HepG2 (cell line): ENCODE measurements at regions of chr11 and their contacts with region 1.

Region 1: DNA sequence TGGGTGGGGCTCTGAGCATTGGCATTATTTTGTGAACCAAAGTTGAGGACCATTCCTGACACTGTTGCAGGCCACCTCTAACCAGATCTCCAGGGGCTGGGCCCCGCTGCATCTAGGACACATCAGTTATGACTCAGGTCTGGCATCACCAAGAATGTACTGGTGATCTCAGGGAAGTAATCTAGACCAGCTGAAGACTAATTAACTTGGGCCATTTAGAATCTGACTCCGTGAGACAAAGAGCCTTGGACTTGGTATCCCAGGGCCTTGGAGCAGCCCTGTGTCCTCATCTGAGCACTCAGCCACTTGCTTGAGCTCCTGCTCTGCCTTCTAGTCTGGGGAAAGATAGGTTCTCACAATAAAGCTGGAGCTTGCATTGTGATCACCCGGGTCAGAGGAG is 200.6 kb downstream of the KIRREL3 start:
- DNase-seq: no peak
- ATAC-seq: no peak
- H3K4me3 ChIP-seq: no peak overlapping the region
- H3K27ac ChIP-seq: no peak overlapping the region
- H3K4me1 ChIP-seq: no peaks in the 10 kb centered on the region
- H3K27me3 ChIP-seq: peaks cover 0 to 5% of the 10 kb centered on the region in 2 experiments; a peak in 1 of 5 replicates
- CTCF ChIP-seq: no peak
- EP300 ChIP-seq: no peak
- POLR2A ChIP-seq: no peak
- RAD21 ChIP-seq: no peak

Region 2: GRCh38 chr11:126736682-126737572 is 63.1 kb before region 1 on chr11:
- CTCF ChIA-PET with region 1: no interaction called
- POLR2A ChIA-PET with region 1: no interaction called
- in situ Hi-C with region 1: no loop called
- intact Hi-C with region 1: loop called (anchors 2 kb)
- DNase-seq: no peak
- ATAC-seq: no peak
- H3K4me3 ChIP-seq: no peak overlapping the region
- H3K27ac ChIP-seq: no peak overlapping the region
- H3K4me1 ChIP-seq: no peaks in the 10 kb centered on the region
- H3K27me3 ChIP-seq: peaks cover 3 to 15% of the 10 kb centered on the region in 2 experiments; a peak in 2 of 5 replicates
- CTCF ChIP-seq: no peak
- EP300 ChIP-seq: no peak
- POLR2A ChIP-seq: no peak
- RAD21 ChIP-seq: no peak

Region 3: GRCh38 chr11:126764231-126764630 is 35.8 kb before region 1 on chr11:
- CTCF ChIA-PET with region 1: no interaction called
- POLR2A ChIA-PET with region 1: no interaction called
- in situ Hi-C with region 1: no loop called
- intact Hi-C with region 1: no loop called
- DNase-seq: no peak
- ATAC-seq: peak; percentile 46; the same call in 2 of the 3 replicates
- H3K4me3 ChIP-seq: no peak overlapping the region
- H3K27ac ChIP-seq: no peak overlapping the region
- H3K4me1 ChIP-seq: no peaks in the 10 kb centered on the region
- H3K27me3 ChIP-seq: peaks cover 2 to 12% of the 10 kb centered on the region in 2 experiments; a peak in 3 of 5 replicates
- CTCF ChIP-seq: peak; percentile 18; the same call in 1 of the 2 replicates
- EP300 ChIP-seq: no peak
- POLR2A ChIP-seq: no peak
- RAD21 ChIP-seq: no peak

Region 4: GRCh38 chr11:126949066-126949891 is 149.3 kb after region 1 on chr11:
- CTCF ChIA-PET with region 1: no interaction called
- POLR2A ChIA-PET with region 1: no interaction called
- in situ Hi-C with region 1: no loop called
- intact Hi-C with region 1: no loop called
- DNase-seq: no peak
- ATAC-seq: no peak
- H3K4me3 ChIP-seq: no peak overlapping the region
- H3K27ac ChIP-seq: no peak overlapping the region
- H3K4me1 ChIP-seq: no peaks in the 10 kb centered on the region
- H3K27me3 ChIP-seq: peaks cover 3 to 16% of the 10 kb centered on the region in 2 experiments; a peak in 4 of 5 replicates
- CTCF ChIP-seq: no peak
- EP300 ChIP-seq: no peak
- POLR2A ChIP-seq: no peak
- RAD21 ChIP-seq: no peak

Region 5: DNA sequence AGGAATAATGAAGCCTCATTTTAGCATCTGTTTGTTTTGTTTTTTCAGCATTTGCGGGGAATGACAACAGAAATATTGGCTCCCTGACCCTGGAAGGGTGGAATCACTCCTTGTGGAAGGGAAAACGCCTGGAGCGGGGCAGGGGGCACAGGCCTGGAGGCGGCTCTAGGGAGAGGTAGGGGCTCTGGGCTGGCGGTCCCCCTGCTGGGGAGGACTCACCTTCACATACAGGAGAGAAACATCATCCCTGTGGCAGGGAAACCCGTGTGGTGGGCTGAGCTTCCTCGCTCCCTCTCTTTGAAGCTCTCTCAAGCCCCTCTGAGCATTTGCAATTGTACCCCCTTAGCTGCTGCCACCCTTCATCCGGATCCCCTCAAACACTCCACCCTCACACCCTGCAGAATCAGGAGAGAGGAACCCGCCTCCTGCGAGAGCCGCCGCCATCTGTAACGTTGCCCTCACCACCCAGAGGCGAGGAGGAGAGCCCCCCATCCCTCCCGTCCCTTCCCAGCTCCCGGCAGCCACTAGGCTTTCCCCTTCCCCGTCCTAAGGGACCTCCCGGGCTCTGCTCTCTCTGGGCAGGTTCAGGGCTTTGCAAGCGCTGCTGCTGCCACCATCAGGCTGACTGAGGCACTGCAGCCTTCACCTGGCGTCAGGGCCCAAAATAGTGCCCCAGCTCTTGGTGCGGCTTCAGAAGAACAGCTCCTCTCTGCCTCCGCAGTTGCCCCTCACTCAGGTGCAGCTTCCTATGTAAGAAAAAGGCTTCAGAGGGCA is 190.1 kb after region 1 on chr11:
- CTCF ChIA-PET with region 1: no interaction called
- POLR2A ChIA-PET with region 1: no interaction called
- in situ Hi-C with region 1: no loop called
- intact Hi-C with region 1: no loop called
- DNase-seq: peak; percentile 38
- ATAC-seq: peak; percentile 97
- H3K4me3 ChIP-seq: no peak overlapping the region
- H3K27ac ChIP-seq: no peak overlapping the region
- H3K4me1 ChIP-seq: no peaks in the 10 kb centered on the region
- H3K27me3 ChIP-seq: peaks cover 3 to 22% of the 10 kb centered on the region in 2 experiments; a peak in 4 of 5 replicates
- CTCF ChIP-seq: peak; percentile 94
- EP300 ChIP-seq: no peak
- POLR2A ChIP-seq: no peak
- RAD21 ChIP-seq: peak; percentile 81